ENCODE measurements at regions of chr20 and their contacts with region 1.

Region 1: DNA sequence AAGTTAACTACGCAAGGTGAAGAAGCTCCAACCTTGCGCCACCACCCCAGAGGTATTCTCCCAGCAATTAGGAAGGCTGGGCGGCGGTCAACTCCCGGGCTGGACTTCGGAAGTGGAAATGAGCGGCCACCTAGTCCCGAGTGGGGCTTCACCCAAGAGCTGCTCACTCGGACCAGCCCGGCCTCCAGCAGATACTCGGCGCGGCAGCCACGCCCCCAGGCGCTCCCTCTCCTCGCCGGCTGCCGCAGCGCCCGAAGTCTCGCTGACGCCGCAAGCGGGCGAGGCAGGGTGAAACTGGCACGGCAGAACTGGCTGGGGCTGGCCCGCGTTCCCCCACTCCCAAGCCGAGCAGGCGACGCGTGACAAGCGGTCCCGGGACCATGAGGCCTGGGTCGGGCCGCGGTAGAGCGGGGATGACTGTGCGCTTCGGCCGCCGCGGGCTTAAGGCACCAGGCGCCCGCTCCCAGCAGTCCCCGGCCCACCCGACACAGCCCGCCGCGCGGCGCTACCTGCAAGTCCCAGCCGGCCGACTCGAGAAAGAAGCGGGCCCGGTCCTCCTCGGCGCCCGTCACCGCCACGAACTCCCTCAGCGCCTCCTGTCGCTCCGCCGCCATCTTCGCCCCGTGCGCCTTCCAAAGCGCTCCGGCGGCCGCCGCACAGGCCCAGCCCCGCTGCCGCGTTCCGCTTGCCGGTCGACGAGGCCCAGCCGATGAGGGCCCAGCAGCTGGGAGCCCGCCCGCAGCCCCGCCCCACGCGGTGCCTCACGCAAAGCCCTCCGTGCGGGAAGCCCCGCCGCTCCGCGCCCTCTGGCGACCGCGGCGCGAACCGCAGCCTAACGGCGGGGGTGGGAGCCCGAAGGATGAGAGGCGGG is at the start of gene NSFL1C:
- DNase-seq: peak; percentile 85
- H3K4me3 ChIP-seq: peak within 1 kb of the TSS; percentile 88
- H3K27ac ChIP-seq: peak within 1 kb of the TSS; percentile 49
- H3K27me3 ChIP-seq: peaks cover 4% of the 10 kb centered on the region
- CTCF ChIP-seq: peak; percentile 79
- polyA plus RNA-seq, gene NSFL1C: 23.0 and 23.4 TPM in 2 replicates

Region 2: GRCh38 chr20:1225783-1226654 is 240.4 kb before region 1 on chr20 and contains the start of gene RAD21L1:
- CTCF ChIA-PET with region 1: no interaction called
- POLR2A ChIA-PET with region 1: no interaction called
- DNase-seq: peak; percentile 21
- H3K4me3 ChIP-seq: peak within 1 kb of the TSS; percentile 68
- H3K27ac ChIP-seq: no peak within 1 kb of the TSS
- H3K27me3 ChIP-seq: peaks cover 12% of the 10 kb centered on the region
- CTCF ChIP-seq: no peak
- polyA plus RNA-seq, gene RAD21L1: 0.04 and 0.05 TPM in 2 replicates

Region 3: DNA sequence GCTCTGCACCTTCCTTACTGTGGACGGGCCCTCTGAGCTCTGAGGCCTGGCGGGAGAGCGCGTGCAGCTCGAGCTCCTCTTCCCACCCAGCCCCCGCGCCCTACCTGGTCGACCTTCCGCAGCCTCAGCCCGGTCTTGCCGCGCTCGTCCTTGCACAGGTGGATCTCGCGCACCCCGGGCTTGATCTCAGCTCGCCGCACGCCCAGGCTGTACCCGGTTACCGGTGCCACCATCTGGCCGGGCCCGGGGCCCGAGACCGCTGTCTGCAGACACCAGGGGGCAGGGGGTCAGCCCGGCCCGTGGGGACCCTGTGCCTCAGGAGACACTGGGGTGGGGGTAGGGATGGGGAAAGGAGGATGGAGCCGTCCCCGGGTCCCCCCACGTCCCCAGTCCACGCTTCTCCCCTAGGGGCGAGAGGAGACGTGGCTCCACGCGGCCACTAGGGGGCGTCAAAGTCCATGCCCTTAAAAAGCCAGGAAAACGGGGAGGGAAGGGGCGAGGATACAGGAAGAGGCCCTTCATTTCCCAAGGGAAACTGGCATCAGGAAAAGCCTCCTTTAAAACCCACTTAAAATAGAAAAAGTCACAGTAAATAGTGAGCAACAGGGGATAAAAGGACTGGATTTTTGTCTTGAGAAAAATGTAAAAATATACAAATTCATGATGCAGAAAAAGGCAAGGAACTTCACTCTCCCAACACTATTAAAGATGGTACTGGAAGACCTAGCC is 153.0 kb before region 1 on chr20:
- CTCF ChIA-PET with region 1: interaction called, 13 read pairs
- POLR2A ChIA-PET with region 1: no interaction called
- DNase-seq: no peak
- H3K4me3 ChIP-seq: peak overlapping the region; percentile 45; the same call in 1 of the 2 replicates
- H3K27ac ChIP-seq: no peak overlapping the region
- H3K27me3 ChIP-seq: no peaks in the 10 kb centered on the region
- CTCF ChIP-seq: peak; percentile 95

Region 4: DNA sequence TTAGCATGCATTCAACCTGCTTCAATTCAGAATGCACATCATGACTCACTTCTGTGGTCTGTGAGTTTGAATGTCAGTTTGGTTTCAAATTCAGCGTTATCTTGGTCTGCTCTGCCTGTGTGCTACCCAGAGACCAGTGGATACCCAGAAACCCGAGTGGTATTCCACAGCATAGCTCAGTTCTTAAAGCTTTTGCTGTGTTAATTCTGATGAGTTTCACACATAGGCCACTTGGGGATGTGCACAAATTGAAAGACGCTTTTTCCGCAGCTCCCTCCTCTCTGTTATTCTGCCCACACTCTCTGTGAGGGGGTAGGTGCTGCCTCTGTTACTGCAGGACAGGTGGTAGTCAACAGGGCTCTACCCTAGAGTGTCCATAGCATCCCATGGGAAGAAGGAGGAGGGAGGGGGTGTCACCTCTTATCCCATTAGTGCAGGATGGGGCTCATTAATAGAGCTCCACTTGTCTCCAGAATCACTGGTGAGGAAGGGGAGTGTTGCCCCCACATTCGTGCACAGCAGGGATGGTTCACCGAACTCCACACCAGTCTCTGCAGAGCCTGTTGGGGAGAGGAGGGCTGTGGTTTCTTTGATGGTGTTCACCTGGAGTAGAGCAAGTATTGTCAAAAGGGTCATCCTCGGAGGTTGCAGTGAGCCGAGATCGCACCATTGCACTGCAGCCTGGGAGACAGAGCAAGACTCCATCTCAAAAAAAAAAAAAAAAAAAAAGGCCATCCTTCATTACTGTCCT is 108.3 kb before region 1 on chr20:
- CTCF ChIA-PET with region 1: no interaction called
- POLR2A ChIA-PET with region 1: interaction called, 11 read pairs
- DNase-seq: no peak
- H3K4me3 ChIP-seq: no peak overlapping the region
- H3K27ac ChIP-seq: no peak overlapping the region
- H3K27me3 ChIP-seq: no peaks in the 10 kb centered on the region
- CTCF ChIP-seq: no peak

Region 5: GRCh38 chr20:1450926-1451491 is 15.4 kb before region 1 on chr20:
- CTCF ChIA-PET with region 1: interaction called, 20 read pairs
- POLR2A ChIA-PET with region 1: interaction called, 3 read pairs
- DNase-seq: no peak
- H3K4me3 ChIP-seq: no peak overlapping the region
- H3K27ac ChIP-seq: no peak overlapping the region
- H3K27me3 ChIP-seq: no peaks in the 10 kb centered on the region
- CTCF ChIP-seq: no peak

Measured in AG04450 (cell line).